IMR-90 (cell line): ENCODE measurements at regions of chr11 and their contacts with region 1.

Region 1: DNA sequence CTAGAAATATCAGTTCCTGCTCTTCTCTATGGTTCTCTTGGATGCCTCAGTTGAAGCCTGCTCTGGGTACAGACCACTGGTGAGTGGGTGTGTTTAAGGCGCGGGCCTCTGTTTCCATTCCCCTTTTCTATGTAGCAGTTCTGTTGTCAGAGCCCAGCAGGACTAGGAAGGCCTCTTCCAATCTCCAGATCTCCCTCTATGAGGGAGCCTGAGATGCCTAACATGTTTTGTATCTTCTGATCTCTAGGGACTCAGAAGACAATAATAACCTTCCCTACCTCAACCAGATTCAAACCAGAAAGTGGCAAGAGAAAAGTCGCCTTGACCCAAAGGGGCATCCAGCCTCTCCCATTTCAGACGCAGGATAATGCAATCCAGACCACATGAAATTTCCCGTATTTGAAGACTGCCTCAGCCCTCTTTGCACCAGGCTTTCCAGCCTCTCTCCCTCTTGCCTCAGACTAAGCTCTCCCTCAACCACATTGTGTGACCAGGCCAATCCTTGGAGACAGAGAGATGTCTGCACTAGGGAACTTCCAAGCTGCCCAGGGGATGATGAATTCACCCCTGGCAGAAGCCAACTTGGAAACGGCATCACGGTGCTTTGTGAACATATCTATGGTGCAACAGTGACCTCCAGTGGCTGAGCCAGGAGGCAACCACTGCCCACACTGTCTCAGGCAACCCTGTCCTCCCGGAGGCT is 150.1 kb upstream of the UBASH3B start:
- DNase-seq: peak; percentile 95
- ATAC-seq: peak; percentile 99
- H3K4me3 ChIP-seq: no peak overlapping the region
- H3K27ac ChIP-seq: peak overlapping the region; percentile 47
- H3K4me1 ChIP-seq: peaks cover 5% of the 10 kb centered on the region; the same call in 1 of the 2 replicates
- H3K27me3 ChIP-seq: no peaks in the 10 kb centered on the region
- CTCF ChIP-seq: peak; percentile 96
- POLR2A ChIP-seq: peak; percentile 41; the same call in 1 of the 2 replicates
- RAD21 ChIP-seq: peak; percentile 96

Region 2: GRCh38 chr11:120517390-120517761 is 1988.1 kb before region 1 on chr11:
- CTCF ChIA-PET with region 1: no interaction called
- POLR2A ChIA-PET with region 1: no interaction called
- dilution Hi-C with region 1: no loop called
- in situ Hi-C with region 1: no loop called
- intact Hi-C with region 1: loop called (anchors 5 kb)
- DNase-seq: peak; percentile 52
- ATAC-seq: peak; percentile 71
- H3K4me3 ChIP-seq: no peak overlapping the region
- H3K27ac ChIP-seq: peak overlapping the region; percentile 87
- H3K4me1 ChIP-seq: peaks cover 13% of the 10 kb centered on the region; the same call in 1 of the 2 replicates
- H3K27me3 ChIP-seq: no peaks in the 10 kb centered on the region
- CTCF ChIP-seq: no peak
- POLR2A ChIP-seq: no peak
- RAD21 ChIP-seq: no peak

Region 3: DNA sequence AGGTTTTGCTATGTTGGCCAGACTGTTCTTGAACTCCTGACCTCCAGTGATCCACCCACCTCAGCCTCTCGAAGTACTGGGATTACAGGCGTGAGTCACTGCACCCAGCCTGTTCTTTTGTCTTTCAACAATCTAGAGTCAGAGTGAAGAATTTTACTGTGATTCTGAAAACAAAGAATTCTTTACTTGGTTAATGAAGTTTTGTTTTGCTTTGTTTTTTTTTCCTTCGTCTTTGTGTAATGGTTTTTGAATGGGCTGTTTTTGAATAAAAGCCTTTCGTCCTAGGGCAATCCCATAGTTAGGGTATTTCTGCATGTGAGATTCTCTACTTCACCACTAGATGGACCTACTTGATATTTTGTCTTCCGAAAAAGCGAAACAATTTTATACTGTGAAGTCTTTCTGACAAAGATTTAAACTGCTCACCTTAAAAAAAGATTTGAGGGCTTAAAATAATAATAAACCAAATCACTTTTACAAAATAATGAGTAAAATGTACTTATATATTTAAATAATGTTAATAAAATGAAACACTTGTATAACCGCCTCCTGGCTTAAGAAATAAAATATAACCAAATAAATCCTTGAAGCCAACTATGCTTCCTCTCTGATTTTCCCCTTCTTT is 1256.3 kb before region 1 on chr11:
- CTCF ChIA-PET with region 1: interaction called, 3 read pairs
- POLR2A ChIA-PET with region 1: no interaction called
- dilution Hi-C with region 1: no loop called
- in situ Hi-C with region 1: no loop called
- intact Hi-C with region 1: loop called (anchors 5 kb)
- DNase-seq: peak; percentile 48
- ATAC-seq: peak; percentile 94
- H3K4me3 ChIP-seq: no peak overlapping the region
- H3K27ac ChIP-seq: no peak overlapping the region
- H3K4me1 ChIP-seq: no peaks in the 10 kb centered on the region
- H3K27me3 ChIP-seq: peaks cover 3% of the 10 kb centered on the region
- CTCF ChIP-seq: peak; percentile 67
- POLR2A ChIP-seq: no peak
- RAD21 ChIP-seq: peak; percentile 47

Region 4: GRCh38 chr11:121655537-121656327 is 849.7 kb before region 1 on chr11:
- CTCF ChIA-PET with region 1: interaction called, 8 read pairs
- POLR2A ChIA-PET with region 1: no interaction called
- dilution Hi-C with region 1: no loop called
- in situ Hi-C with region 1: loop called (anchors 5 kb)
- intact Hi-C with region 1: loop called (anchors 1 kb)
- DNase-seq: peak; percentile 99
- ATAC-seq: peak; percentile 88
- H3K4me3 ChIP-seq: peak overlapping the region; percentile 28
- H3K27ac ChIP-seq: peak overlapping the region; percentile 97
- H3K4me1 ChIP-seq: peaks cover 28% of the 10 kb centered on the region
- H3K27me3 ChIP-seq: no peaks in the 10 kb centered on the region
- CTCF ChIP-seq: peak; percentile 97
- POLR2A ChIP-seq: peak; percentile 64; the same call in 1 of the 2 replicates
- RAD21 ChIP-seq: peak; percentile 99

Region 5: DNA sequence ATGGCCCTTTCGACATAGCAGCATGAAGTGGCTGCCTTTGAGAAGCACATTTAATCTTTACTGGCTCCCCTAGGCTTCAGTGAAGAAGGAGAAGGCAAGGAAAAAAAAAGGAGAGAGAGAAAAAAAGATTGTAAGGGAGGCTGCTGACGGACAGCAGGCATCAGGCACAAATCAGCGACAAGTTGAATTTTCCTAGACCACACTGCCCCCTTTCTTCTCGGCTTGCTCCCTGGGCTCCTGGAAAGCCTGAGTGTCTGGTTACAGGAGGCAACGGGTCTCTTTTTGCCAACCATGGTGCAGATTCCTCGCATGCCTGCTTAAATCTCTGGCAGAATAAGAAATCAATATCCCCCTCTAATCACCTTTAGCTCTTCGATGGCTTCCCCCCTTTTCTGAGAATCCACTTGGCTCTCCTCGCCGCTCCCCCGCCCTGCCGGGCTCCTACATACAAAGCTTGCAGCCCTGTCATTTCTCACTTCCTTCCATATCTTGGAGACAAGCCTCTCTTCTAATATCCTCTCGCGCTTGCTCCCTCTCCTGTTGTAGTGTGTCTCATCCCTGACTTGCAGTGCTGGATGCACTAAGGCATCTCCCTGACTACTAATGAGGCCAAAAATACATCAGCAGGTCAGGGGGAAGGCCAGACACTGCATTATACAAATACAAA is 403.7 kb before region 1 on chr11:
- CTCF ChIA-PET with region 1: no interaction called
- POLR2A ChIA-PET with region 1: interaction called, 4 read pairs
- dilution Hi-C with region 1: no loop called
- in situ Hi-C with region 1: loop called (anchors 10 kb)
- intact Hi-C with region 1: loop called (anchors 1 kb)
- DNase-seq: peak; percentile 85
- ATAC-seq: peak; percentile 36
- H3K4me3 ChIP-seq: peak overlapping the region; percentile 91
- H3K27ac ChIP-seq: peak overlapping the region; percentile 95
- H3K4me1 ChIP-seq: peaks cover 11% of the 10 kb centered on the region
- H3K27me3 ChIP-seq: no peaks in the 10 kb centered on the region
- CTCF ChIP-seq: peak; percentile 55
- POLR2A ChIP-seq: peak; percentile 51
- RAD21 ChIP-seq: peak; percentile 61

Region 6: DNA sequence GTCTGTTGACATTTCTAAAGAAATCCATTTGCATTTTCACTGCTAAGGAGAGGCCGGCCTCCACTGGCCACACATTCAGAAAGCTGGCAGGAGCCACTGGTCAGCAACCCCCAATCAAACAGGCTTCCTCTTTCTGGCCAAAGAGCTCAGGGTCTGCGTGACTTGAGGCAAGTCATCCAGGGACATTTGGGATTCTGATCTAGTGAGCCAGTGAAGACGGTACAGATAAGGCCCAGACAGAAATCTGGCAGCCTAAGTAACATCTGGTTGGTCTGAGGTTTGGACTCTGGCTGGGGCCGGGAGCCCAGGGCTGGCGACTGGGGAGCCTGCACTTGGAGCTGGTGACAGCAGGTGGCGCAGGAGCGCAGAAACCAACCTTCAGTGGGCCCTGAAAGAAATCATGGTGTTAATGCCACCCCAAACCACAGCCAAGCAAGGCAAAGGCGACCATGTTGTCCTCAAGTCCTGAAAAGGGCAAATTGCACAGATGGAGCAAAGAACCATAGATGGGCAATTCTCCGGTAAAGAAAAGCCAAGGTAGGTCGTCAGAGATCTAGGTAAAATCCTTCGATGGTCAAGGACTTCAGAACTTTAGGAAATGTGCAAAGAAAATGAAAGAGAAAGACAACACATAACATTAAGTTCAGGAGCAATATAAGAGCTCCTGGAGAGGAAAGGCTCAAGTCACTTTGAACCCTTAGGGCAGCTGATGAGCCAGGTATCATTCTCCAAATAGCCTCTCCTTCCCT is 290.0 kb before region 1 on chr11:
- CTCF ChIA-PET with region 1: interaction called, 17 read pairs
- POLR2A ChIA-PET with region 1: no interaction called
- dilution Hi-C with region 1: no loop called
- in situ Hi-C with region 1: loop called (anchors 5 kb)
- intact Hi-C with region 1: loop called (anchors 1 kb)
- DNase-seq: peak; percentile 99
- ATAC-seq: peak; percentile 88
- H3K4me3 ChIP-seq: no peak overlapping the region
- H3K27ac ChIP-seq: peak overlapping the region; percentile 76
- H3K4me1 ChIP-seq: peaks cover 23% of the 10 kb centered on the region
- H3K27me3 ChIP-seq: no peaks in the 10 kb centered on the region
- CTCF ChIP-seq: peak; percentile 97
- POLR2A ChIP-seq: peak; percentile 49; the same call in 1 of the 2 replicates
- RAD21 ChIP-seq: peak; percentile 88

Region 7: DNA sequence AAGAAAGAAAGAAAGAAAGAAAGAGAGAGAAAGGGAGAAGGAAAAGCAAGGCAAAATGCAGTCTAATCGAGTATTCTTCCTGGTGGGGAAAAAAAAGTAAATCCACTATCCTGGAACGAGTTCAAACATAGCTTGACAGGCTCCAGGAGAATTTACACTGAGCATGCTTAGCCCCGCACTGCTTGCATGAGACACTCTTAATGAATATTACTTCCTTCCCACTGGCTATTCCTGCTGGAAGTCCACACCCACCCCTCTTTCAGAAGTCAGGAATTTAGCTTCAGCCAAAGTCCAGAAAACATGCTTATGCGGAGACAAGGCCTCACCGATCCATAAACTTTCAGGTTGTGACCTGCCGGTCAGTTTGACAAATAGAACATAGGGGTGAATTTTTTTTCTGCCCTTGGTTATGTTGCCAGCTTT is 137.6 kb before region 1 on chr11:
- CTCF ChIA-PET with region 1: no interaction called
- POLR2A ChIA-PET with region 1: no interaction called
- dilution Hi-C with region 1: no loop called
- in situ Hi-C with region 1: no loop called
- intact Hi-C with region 1: loop called (anchors 1 kb)
- DNase-seq: peak; percentile 82
- ATAC-seq: peak; percentile 92
- H3K4me3 ChIP-seq: no peak overlapping the region
- H3K27ac ChIP-seq: peak overlapping the region; percentile 34
- H3K4me1 ChIP-seq: no peaks in the 10 kb centered on the region
- H3K27me3 ChIP-seq: no peaks in the 10 kb centered on the region; the same call in 1 of the 2 replicates
- CTCF ChIP-seq: no peak
- POLR2A ChIP-seq: no peak
- RAD21 ChIP-seq: no peak

Region 8: GRCh38 chr11:122781378-122782195 is 276.1 kb after region 1 on chr11:
- CTCF ChIA-PET with region 1: no interaction called
- POLR2A ChIA-PET with region 1: no interaction called
- dilution Hi-C with region 1: no loop called
- in situ Hi-C with region 1: no loop called
- intact Hi-C with region 1: no loop called
- DNase-seq: peak; percentile 90
- ATAC-seq: peak; percentile 87
- H3K4me3 ChIP-seq: no peak overlapping the region
- H3K27ac ChIP-seq: no peak overlapping the region
- H3K4me1 ChIP-seq: peaks cover 10% of the 10 kb centered on the region
- H3K27me3 ChIP-seq: no peaks in the 10 kb centered on the region
- CTCF ChIP-seq: peak; percentile 94
- POLR2A ChIP-seq: no peak
- RAD21 ChIP-seq: peak; percentile 95